A549 (cell line): ENCODE measurements at regions of chr1 and their contacts with region 1.

Region 1: GRCh38 chr1:1959840-1960479 is 40.9 kb upstream of the TMEM52 start:
- DNase-seq: peak; percentile 78 to 89
- ATAC-seq: peak; percentile 92 to 95
- H3K4me3 ChIP-seq: peak overlapping the region; percentile 36
- H3K27ac ChIP-seq: peak overlapping the region; percentile 21 to 29; a peak in 2 of 6 replicates
- H3K4me1 ChIP-seq: peaks cover 6% of the 10 kb centered on the region; the same call in 1 of the 3 replicates
- CTCF ChIP-seq: peak; percentile 75
- EP300 ChIP-seq: no peak
- POLR2A ChIP-seq: no peak
- RAD21 ChIP-seq: peak; percentile 62 to 71

Region 2: DNA sequence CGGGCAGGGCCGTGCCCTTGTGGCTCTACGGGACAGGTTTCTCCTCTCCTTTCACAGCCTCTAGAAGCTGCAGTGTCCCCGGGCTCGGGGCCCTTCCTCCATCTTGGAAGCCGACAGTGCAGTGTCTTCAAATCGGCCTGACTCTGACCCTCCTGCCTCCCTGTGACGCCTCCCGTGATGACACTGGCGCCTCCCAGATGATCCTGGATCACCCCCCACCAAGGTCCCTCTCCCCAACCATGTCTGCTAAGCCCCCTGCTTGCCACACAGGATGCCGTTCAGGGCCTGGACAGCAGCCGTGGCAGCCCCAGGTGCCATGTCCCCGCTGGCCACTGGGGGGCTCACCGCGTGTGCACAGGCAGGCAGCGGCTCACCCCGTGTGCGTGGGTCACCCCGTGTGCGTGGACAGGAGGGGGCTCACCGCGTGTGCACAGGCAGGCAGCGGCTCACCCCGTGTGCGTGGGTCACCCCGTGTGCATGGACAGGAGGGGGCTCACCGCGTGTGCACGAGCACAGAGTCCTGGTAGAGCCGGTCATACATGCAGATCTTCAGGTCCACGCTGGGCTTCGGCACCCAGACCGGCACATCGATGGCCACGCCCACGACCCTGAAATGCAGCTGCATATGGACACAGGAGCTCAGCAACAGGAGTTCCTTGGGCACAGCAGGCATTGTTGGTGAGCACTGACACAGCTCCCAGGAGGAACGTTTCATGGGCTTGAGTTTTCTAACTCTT is 16.0 kb before region 1 on chr1:
- CTCF ChIA-PET with region 1: interaction called, 76 read pairs
- POLR2A ChIA-PET with region 1: no interaction called
- DNase-seq: peak; percentile 64 to 71
- ATAC-seq: peak; percentile 94 to 97
- H3K4me3 ChIP-seq: 0 out of 3 replicates have a peak overlapping the region, but pooled peaks have one; percentile 11
- H3K27ac ChIP-seq: peak overlapping the region in 1 of 2 experiments; percentile 57; a peak in 3 of 6 replicates
- H3K4me1 ChIP-seq: no peaks in the 10 kb centered on the region
- CTCF ChIP-seq: peak; percentile 67
- EP300 ChIP-seq: no peak
- POLR2A ChIP-seq: no peak
- RAD21 ChIP-seq: peak; percentile 37 to 42; a peak in 3 of 5 replicates

Region 3: GRCh38 chr1:2031546-2032540 is 71.9 kb after region 1 on chr1:
- CTCF ChIA-PET with region 1: interaction called, 13 read pairs
- POLR2A ChIA-PET with region 1: no interaction called
- DNase-seq: no peak
- ATAC-seq: no peak; a peak in 1 of 6 replicates
- H3K4me3 ChIP-seq: no peak overlapping the region
- H3K27ac ChIP-seq: no peak overlapping the region
- H3K4me1 ChIP-seq: no peaks in the 10 kb centered on the region
- CTCF ChIP-seq: no peak
- EP300 ChIP-seq: no peak
- POLR2A ChIP-seq: no peak
- RAD21 ChIP-seq: no peak

Region 4: GRCh38 chr1:2049718-2050427 is 89.9 kb after region 1 on chr1 and contains the start of gene PRKCZ:
- CTCF ChIA-PET with region 1: interaction called, 126 read pairs
- POLR2A ChIA-PET with region 1: interaction called, 5 read pairs
- DNase-seq: peak; percentile 76 to 86
- ATAC-seq: peak; percentile 77 to 86
- H3K4me3 ChIP-seq: peak within 1 kb of the TSS; percentile 90
- H3K27ac ChIP-seq: peak within 1 kb of the TSS; percentile 85 to 97
- H3K4me1 ChIP-seq: 0 out of 3 replicates have a peak, but pooled peaks cover 2% of the 10 kb centered on the region
- CTCF ChIP-seq: no peak
- EP300 ChIP-seq: no peak
- POLR2A ChIP-seq: peak; percentile 47
- RAD21 ChIP-seq: no peak
- polyA plus RNA-seq, gene PRKCZ: 7.3 and 9.8 TPM in 2 replicates